Activated CD8-positive, alpha-beta T cell treated with anti-CD3 and anti-CD28 coated beads, Interleukin-2, amount 10 ng/mL, durations not matched to agents 7 days and 5 days (primary cell): ENCODE measurements at regions of chr1 and their contacts with region 1.

Region 1: DNA sequence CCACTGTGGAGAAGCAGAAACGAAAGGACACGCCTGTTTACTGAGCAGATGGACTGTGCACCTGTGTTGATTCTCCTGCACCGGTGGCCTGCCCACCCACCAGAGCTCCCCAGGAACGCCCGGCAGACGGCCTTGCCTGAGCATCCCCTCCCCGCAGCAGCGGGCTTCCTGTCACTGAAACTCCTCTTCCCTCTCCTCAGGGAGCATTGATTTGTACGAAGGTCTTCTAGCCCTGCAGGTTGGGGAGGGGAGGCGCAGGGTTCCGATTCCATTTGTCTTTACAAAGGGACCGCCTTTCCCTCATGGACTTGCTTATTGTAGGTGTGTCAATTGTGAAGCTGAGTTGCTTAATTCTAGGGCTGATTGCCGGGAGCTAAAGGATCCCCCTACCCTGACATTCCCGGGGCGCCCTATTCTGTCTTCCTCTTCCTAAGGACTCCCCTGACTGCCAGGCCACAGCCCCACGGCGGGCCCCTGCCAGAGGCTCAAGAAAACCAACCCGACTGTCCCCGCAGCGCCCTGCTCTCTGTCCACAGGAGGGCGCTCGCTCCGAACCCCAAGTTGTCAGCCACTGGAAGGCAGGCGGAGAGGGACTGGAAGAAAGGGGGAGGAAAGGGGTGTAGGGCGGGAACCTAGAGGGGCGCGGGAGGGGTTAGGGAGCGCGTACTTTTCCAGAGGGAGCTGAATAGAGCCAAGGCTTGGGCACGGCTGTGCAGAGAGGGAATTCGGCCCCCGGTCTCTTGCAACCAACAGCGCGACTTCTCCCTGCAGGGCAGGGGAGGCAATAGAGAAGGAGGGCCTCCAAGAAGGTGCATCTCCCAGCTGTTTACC is 2.8 kb downstream of the S100A6 start:
- DNase-seq: peak; percentile 86
- ATAC-seq: peak; percentile 29
- H3K4me3 Mint-ChIP-seq: peak overlapping the region; percentile 98
- H3K27ac Mint-ChIP-seq: peak overlapping the region; percentile 90
- H3K4me1 Mint-ChIP-seq: peaks cover 63% of the 10 kb centered on the region
- H3K27me3 Mint-ChIP-seq: no peaks in the 10 kb centered on the region

Region 2: GRCh38 chr1:153520230-153520629 is 12.8 kb before region 1 on chr1:
- CTCF ChIA-PET with region 1: interaction called, 34 read pairs
- POLR2A ChIA-PET with region 1: interaction called, 4 read pairs
- DNase-seq: no peak
- ATAC-seq: no peak
- H3K4me3 Mint-ChIP-seq: no peak overlapping the region
- H3K27ac Mint-ChIP-seq: no peak overlapping the region
- H3K4me1 Mint-ChIP-seq: peaks cover 27% of the 10 kb centered on the region
- H3K27me3 Mint-ChIP-seq: peaks cover 3% of the 10 kb centered on the region

Region 3: DNA sequence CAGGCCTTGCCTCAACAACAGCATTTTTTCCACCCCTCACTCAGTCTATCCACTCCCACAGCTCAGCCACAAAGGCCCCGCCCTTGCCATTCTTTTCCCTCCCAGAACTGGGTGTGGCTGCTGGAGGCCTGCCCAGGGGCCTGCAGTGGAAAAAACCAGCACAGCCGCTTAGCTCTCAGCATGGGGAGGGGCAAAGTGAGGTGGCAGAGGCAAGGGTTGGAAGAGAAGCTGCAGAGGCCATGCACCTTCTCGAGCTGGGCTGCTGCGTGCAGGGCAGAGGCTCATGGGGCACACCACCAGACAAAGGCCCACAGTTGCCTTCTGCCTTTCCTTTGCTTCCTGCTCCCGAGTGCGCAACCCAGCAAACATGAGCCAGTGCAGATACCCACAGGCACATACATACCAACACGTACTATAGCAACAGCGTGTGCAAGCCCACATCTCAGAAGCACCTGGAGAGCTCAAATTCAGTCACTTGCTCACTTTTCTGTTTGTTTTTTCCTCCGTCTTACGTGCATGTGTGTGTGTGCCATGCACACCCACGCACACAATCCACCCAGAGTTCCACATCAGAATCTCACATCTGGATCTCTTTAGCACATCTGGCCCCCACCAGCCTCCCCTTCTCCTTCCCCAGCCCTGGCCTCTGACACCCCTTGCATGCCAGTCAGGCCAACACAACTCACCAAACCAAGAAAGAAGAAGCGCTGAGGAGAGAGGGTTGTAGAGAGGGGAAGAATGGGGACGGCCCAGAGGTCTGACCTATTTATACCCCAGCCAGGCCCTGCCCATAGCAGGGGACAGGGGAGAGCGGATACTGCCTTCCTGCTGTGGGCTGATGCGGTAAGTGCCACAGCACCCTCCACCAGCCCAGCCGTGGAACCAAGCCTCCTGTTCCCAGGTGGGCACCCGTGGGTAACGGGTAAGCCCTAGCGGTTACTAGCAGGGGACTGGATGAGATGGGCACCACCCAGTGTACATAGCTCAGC is 12.4 kb after region 1 on chr1 and contains the start of gene S100A4:
- CTCF ChIA-PET with region 1: interaction called, 185 read pairs
- POLR2A ChIA-PET with region 1: interaction called, 89 read pairs
- DNase-seq: peak; percentile 95
- ATAC-seq: peak; percentile 84
- H3K4me3 Mint-ChIP-seq: peak within 1 kb of the TSS; percentile 93
- H3K27ac Mint-ChIP-seq: peak within 1 kb of the TSS; percentile 97
- H3K4me1 Mint-ChIP-seq: peaks cover 83% of the 10 kb centered on the region
- H3K27me3 Mint-ChIP-seq: peaks cover 3% of the 10 kb centered on the region
- total RNA-seq, gene S100A4: 628 to 665 TPM

Region 4: DNA sequence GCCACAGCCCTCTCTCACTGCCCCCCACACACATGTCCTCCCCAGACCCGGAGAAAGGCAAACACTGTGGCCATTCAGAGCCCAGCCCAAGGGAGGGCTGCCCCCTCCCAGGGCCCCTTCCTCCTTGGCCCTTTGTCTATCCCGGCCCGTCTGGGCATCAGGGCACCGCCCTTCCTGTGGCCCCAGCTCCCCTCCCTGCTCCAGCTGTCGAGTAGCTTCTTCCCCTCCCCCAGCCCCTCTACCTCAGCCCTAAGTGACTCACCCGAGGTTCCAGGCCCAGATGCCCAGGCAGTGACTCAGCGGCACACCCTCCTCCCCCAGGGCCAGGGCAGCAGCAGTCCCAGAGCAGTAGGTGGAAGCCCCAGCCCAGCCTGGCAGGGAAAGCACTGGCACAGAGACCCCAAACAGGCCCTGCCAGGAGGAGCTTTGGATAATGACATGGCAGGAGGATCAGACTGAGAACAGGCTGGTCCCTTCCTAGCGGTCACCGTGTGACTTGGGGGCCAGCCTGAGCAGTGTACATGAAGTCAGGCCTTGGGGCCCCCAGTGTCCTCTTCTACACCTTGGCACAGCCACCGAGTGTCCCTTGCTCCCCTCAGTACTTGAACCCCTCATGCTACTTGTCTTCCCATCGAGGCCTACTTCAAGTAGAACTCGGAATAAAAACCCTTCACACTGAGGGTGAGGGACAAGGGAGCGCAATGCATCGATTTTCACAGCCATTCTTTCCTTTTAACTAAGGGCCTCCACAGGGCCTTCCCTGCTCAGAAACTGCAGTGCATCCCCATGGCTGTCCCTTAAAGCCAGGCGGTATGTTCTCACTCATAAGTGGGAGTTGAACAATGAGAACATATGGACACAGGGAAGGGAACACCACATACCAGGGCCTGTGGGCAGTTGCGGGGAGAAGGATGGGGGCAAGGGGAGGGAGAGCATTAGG is 33.7 kb after region 1 on chr1:
- CTCF ChIA-PET with region 1: interaction called, 245 read pairs
- POLR2A ChIA-PET with region 1: interaction called, 12 read pairs
- DNase-seq: peak; percentile 83
- ATAC-seq: peak; percentile 82
- H3K4me3 Mint-ChIP-seq: no peak overlapping the region
- H3K27ac Mint-ChIP-seq: peak overlapping the region; percentile 92
- H3K4me1 Mint-ChIP-seq: peaks cover 38% of the 10 kb centered on the region
- H3K27me3 Mint-ChIP-seq: peaks cover 11% of the 10 kb centered on the region

Region 5: DNA sequence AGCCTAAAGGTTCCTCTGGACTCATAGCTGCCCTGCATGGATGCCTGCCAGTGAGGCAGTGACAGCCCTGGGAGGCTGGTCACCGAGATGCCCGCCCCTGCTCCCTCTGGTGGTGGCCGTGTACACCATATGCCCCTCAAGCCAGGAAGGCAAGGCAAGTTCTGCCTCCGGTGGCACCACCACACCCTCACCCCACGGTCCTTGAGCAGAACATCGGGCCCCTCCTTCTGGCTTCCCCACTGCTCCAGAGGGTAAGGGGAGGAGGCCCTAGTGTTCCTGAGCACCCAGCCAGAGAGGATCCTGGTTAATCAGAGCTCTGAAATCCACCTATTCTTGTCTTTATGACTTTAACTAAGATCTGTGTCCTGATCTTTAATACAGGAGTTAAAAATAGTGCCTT is 84.7 kb after region 1 on chr1:
- CTCF ChIA-PET with region 1: interaction called, 52 read pairs
- POLR2A ChIA-PET with region 1: no interaction called
- DNase-seq: peak; percentile 86
- ATAC-seq: peak; percentile 98
- H3K4me3 Mint-ChIP-seq: no peak overlapping the region
- H3K27ac Mint-ChIP-seq: peak overlapping the region; percentile 30
- H3K4me1 Mint-ChIP-seq: peaks cover 9% of the 10 kb centered on the region
- H3K27me3 Mint-ChIP-seq: no peaks in the 10 kb centered on the region

Region 6: DNA sequence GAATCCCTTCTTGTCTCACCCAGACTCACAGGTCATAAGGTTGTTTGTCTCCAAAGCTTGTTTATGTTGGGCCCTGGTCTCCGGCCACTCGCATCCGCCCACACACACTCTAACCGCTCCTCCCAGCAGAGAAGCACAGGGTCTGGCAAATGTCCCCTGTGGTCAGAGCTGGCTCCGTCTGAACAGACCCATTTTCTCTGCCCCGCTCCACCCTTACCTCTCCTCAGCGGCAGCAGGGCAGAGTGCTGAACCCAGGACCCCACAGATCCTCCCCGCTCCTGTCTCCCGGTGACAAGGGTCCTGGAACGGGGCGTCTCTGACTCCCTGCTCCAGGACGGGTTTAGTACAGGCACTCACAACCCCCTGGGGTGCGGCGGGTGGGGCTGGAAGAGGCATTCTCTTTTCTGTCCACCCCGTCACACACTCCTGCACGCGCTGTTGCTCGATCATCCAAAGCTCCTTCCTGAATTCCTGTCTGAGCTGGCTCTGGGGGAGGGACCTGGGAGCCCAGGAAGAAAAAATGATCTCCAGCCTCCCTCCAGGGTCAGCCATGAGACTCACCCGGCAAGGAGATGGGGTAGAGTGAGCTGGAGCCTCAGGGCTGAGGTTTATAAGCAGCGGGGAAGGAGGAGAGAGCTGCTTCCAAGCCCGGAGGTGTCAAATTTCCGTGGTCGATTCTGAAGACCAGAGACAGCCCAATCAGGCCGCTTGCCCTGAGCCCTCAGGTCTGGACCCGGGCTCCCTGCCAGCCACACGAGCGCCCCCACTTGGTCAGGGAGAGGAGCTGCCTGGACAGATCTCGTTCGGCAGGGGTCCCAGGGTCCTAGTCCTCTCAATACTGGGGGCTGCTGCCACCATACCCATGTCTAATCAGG is 94.2 kb after region 1 on chr1 and contains the start of gene S100A13:
- CTCF ChIA-PET with region 1: interaction called, 10 read pairs
- POLR2A ChIA-PET with region 1: no interaction called
- DNase-seq: no peak
- ATAC-seq: no peak
- H3K4me3 Mint-ChIP-seq: no peak within 1 kb of the TSS
- H3K27ac Mint-ChIP-seq: no peak within 1 kb of the TSS
- H3K4me1 Mint-ChIP-seq: peaks cover 18% of the 10 kb centered on the region
- H3K27me3 Mint-ChIP-seq: no peaks in the 10 kb centered on the region
- total RNA-seq, gene S100A13: 6.2 to 7.0 TPM